Activated CD8-positive, alpha-beta memory T cell treated with anti-CD3 and anti-CD28 coated beads, Interleukin-2, amount 10 ng/mL, durations not matched to agents 7 days and 5 days (primary cell): ENCODE measurements at regions of chr22 and their contacts with region 1.

Region 1: DNA sequence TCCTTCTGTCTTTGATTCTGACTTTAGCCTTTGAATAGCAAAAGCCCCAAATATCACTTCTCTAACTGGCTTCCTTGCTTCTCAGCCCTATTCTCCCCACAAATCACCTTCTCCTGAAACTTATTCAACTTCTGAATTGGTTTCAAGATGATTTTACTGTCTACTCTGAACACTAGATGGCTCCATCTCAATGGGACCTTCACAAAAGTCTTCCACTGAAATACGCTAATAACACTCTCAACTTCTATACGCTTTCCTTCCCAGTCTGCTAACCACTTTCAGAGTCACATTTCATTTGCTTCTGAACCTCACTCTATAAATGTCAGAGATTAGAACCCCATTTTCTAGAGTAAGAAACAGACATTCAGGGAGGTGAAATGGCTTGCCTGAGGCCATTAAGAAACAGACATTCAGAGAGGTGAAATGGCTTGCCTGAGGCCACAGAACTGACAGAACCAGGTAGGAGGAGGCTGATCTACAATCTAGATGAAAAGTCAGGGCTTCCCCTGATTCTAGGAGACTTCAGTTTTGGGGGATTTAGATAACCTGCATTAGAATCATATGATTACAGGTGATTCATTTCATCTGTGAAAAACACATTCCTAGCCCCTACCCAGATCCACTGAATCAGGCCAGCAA is 20.6 kb downstream of the MORC2 start:
- DNase-seq: no peak
- ATAC-seq: no peak
- H3K4me3 Mint-ChIP-seq: no peak overlapping the region
- H3K27ac Mint-ChIP-seq: no peak overlapping the region
- H3K4me1 Mint-ChIP-seq: peaks cover 49% of the 10 kb centered on the region
- H3K27me3 Mint-ChIP-seq: no peaks in the 10 kb centered on the region

Region 2: DNA sequence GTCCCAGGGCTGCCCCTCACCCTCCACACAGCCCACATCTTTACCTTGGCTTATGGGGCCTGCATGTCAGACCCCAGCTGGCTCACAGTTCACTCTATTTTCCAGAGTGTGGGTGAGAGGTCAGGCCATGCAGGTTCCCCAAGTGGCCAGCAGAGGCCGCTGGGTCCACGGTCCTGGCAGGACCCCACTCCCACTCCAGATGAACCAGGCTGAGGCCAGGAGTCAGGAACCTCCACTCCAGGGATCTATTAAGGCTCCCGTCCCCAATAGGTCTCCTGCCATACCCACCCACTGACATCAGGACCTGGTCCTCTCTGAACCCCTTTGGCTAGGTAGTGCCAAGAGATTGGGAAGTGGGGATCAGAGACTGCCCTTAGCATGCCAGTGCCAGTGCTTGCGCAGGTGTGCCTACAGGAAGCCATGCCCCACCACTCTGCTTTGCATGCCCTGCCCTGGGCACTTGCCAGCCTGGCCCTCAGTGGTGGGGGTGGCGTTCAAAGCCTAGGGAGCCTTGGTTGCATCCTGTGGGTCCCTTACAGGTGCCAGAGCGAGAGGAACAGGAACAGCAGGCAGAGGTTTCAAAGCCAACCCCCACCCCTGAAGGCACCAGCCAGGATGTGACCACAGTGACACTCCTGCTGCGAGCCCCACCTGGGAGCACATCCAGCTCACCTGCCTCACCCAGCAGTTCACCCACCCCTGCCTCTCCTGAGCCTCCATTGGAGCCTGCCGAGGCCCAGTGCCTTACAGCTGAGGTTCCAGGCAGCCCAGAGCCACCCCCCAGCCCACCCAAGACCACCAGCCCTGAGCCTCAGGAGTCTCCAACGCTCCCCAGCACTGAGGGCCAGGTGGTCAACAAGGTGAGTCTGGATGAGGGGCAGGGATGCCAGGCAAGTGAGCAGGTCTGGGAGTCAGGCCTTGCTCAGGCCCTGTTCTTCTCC is 141.5 kb after region 1 on chr22:
- CTCF ChIA-PET with region 1: interaction called, 21 read pairs
- DNase-seq: no peak
- ATAC-seq: no peak
- H3K4me3 Mint-ChIP-seq: no peak overlapping the region
- H3K27ac Mint-ChIP-seq: no peak overlapping the region
- H3K4me1 Mint-ChIP-seq: peaks cover 2% of the 10 kb centered on the region
- H3K27me3 Mint-ChIP-seq: no peaks in the 10 kb centered on the region